Naive thymus-derived CD4-positive, alpha-beta T cell (primary cell): ENCODE measurements at regions of chr1 and their contacts with region 1.

Region 1: GRCh38 chr1:94854458-94855306 is 34.5 kb downstream of the SLC44A3 start:
- DNase-seq: peak; percentile 52 to 83 (median 74)
- ATAC-seq: peak; percentile 99
- H3K4me3 ChIP-seq: peak overlapping the region; percentile 47
- H3K4me3 Mint-ChIP-seq: no peak overlapping the region
- H3K27ac ChIP-seq: peak overlapping the region; percentile 43
- H3K27ac Mint-ChIP-seq: no peak overlapping the region
- H3K4me1 ChIP-seq: peaks cover 0 to 3% of the 10 kb centered on the region in 2 donors
- H3K4me1 Mint-ChIP-seq: no peaks in the 10 kb centered on the region
- H3K27me3 ChIP-seq: no peaks in the 10 kb centered on the region
- H3K27me3 Mint-ChIP-seq: peaks cover 0 to 14% (median 5%) of the 10 kb centered on the region in 5 donors

Region 2: GRCh38 chr1:94912263-94913184 is 57.8 kb after region 1 on chr1:
- CTCF ChIA-PET with region 1: no interaction called
- POLR2A ChIA-PET with region 1: no interaction called
- intact Hi-C with region 1: no loop called
- DNase-seq: no peak
- ATAC-seq: no peak
- H3K4me3 ChIP-seq: no peak overlapping the region
- H3K4me3 Mint-ChIP-seq: no peak overlapping the region
- H3K27ac ChIP-seq: no peak overlapping the region
- H3K27ac Mint-ChIP-seq: no peak overlapping the region
- H3K4me1 ChIP-seq: no peaks in the 10 kb centered on the region
- H3K4me1 Mint-ChIP-seq: peaks cover 0 to 6% (median 0%) of the 10 kb centered on the region in 7 donors
- H3K27me3 ChIP-seq: peaks cover 0 to 3% of the 10 kb centered on the region in 2 donors
- H3K27me3 Mint-ChIP-seq: peaks cover 0 to 14% (median 0%) of the 10 kb centered on the region in 5 donors

Region 3: DNA sequence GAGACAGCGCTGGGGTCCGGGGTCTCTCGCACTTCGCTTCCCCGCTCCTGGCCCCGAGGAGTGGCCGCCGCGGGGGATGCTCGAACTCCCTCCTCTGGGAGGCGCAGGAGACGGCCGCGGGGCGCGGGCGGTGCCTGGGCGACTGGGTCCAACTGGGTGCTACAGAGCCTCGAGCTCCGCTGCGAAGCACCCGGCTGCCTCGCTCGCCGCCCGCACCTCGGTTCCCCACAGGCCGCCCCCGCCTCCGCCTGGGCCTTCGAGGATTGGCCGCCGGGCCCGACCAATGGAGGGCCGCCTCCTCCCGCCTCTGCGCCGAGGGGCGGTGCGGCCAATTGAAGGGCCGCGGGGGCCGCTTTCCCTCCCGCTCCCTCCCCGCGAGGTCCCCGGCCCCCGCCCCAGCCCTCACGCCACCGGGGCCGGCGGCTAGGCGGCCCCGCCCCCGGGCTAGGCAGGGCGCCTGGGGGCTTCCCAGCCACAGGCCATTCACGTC is 72.3 kb after region 1 on chr1 and contains the start of gene CNN3:
- CTCF ChIA-PET with region 1: interaction called, 4 read pairs
- POLR2A ChIA-PET with region 1: no interaction called
- intact Hi-C with region 1: loop called (anchors 1 to 10 kb)
- DNase-seq: peak; percentile 56 to 78 (median 68)
- ATAC-seq: peak; percentile 91
- H3K4me3 ChIP-seq: peak within 1 kb of the TSS; percentile 39
- H3K4me3 Mint-ChIP-seq: peak within 1 kb of the TSS; percentile 88 to 97 (median 94)
- H3K27ac ChIP-seq: peak within 1 kb of the TSS; percentile 63
- H3K27ac Mint-ChIP-seq: peak within 1 kb of the TSS; percentile 37 to 92 (median 84)
- H3K4me1 ChIP-seq: no peaks in the 10 kb centered on the region
- H3K4me1 Mint-ChIP-seq: peaks cover 12 to 38% (median 34%) of the 10 kb centered on the region in 7 donors
- H3K27me3 ChIP-seq: no peaks in the 10 kb centered on the region
- H3K27me3 Mint-ChIP-seq: peaks cover 18 to 57% (median 26%) of the 10 kb centered on the region in 5 donors
- total RNA-seq, gene CNN3: 4.4 to 14.9 (median 7.4) TPM

Region 4: GRCh38 chr1:94962409-94963265 is 108.0 kb after region 1 on chr1:
- CTCF ChIA-PET with region 1: interaction called, 4 read pairs
- POLR2A ChIA-PET with region 1: interaction called, 7 read pairs
- intact Hi-C with region 1: loop called in 1 of 2 experiments (anchors 1 kb)
- DNase-seq: peak in 7 of 9 donors; percentile 21 to 41 (median 35)
- ATAC-seq: peak; percentile 73
- H3K4me3 ChIP-seq: peak overlapping the region; percentile 53
- H3K4me3 Mint-ChIP-seq: peak overlapping the region; percentile 82 to 99 (median 90)
- H3K27ac ChIP-seq: peak overlapping the region; percentile 68
- H3K27ac Mint-ChIP-seq: peak overlapping the region; percentile 87 to 99 (median 96)
- H3K4me1 ChIP-seq: peaks cover 0 to 18% of the 10 kb centered on the region in 2 donors
- H3K4me1 Mint-ChIP-seq: peaks cover 0 to 31% (median 15%) of the 10 kb centered on the region in 7 donors
- H3K27me3 ChIP-seq: no peaks in the 10 kb centered on the region
- H3K27me3 Mint-ChIP-seq: no peaks in the 10 kb centered on the region

Region 5: GRCh38 chr1:94993931-94994645 is 139.4 kb after region 1 on chr1:
- CTCF ChIA-PET with region 1: interaction called, 12 read pairs
- POLR2A ChIA-PET with region 1: no interaction called
- intact Hi-C with region 1: no loop called
- DNase-seq: no peak
- ATAC-seq: no peak
- H3K4me3 ChIP-seq: no peak overlapping the region
- H3K4me3 Mint-ChIP-seq: peak overlapping the region in 5 of 10 donors; percentile 0 to 51 (median 26)
- H3K27ac ChIP-seq: no peak overlapping the region
- H3K27ac Mint-ChIP-seq: peak overlapping the region in 5 of 9 donors; percentile 1 to 74 (median 34)
- H3K4me1 ChIP-seq: peaks cover 0 to 14% of the 10 kb centered on the region in 2 donors
- H3K4me1 Mint-ChIP-seq: peaks cover 0 to 24% (median 20%) of the 10 kb centered on the region in 7 donors
- H3K27me3 ChIP-seq: no peaks in the 10 kb centered on the region
- H3K27me3 Mint-ChIP-seq: no peaks in the 10 kb centered on the region

Region 6: GRCh38 chr1:95043141-95043980 is 188.7 kb after region 1 on chr1:
- CTCF ChIA-PET with region 1: interaction called, 112 read pairs
- POLR2A ChIA-PET with region 1: interaction called, 3 read pairs
- intact Hi-C with region 1: loop called (anchors 1 kb)
- DNase-seq: peak; percentile 57 to 81 (median 75)
- ATAC-seq: peak; percentile 100
- H3K4me3 ChIP-seq: no peak overlapping the region
- H3K4me3 Mint-ChIP-seq: no peak overlapping the region
- H3K27ac ChIP-seq: no peak overlapping the region
- H3K27ac Mint-ChIP-seq: no peak overlapping the region
- H3K4me1 ChIP-seq: no peaks in the 10 kb centered on the region
- H3K4me1 Mint-ChIP-seq: no peaks in the 10 kb centered on the region
- H3K27me3 ChIP-seq: no peaks in the 10 kb centered on the region
- H3K27me3 Mint-ChIP-seq: no peaks in the 10 kb centered on the region

Region 7: DNA sequence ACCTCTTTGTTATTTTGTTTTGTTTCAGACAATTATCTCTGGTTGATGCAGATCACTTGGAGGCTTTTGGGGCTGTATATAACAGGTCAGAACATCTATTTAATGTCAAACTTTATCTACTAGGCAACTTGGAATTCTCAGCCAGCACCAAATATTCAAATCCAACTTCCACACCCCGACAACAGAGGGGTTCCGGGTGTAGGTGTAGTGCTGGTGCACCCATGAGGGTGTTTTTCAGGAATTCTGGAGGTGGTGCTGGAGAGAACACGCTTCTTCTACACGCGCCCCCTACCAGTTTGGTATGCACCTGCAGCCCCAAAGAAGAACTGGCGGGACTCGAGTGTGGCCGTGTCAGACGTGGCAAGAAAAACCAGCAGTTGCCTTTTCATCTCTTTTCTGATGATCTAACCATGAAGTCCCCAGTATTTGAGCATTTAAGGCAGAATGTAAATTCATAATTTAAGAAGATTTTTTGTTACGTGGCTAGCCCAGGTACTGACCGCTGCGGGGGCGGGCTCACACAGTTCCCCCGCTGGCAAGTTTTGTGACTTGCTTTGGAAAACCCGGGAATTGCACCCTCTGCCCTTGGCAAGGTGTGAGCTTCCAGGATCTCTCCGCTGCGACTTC is 262.0 kb after region 1 on chr1:
- CTCF ChIA-PET with region 1: interaction called, 3 read pairs
- POLR2A ChIA-PET with region 1: no interaction called
- intact Hi-C with region 1: loop called in 1 of 2 experiments (anchors 2 kb)
- DNase-seq: peak; percentile 8 to 53 (median 44)
- ATAC-seq: peak; percentile 77
- H3K4me3 ChIP-seq: peak overlapping the region; percentile 57
- H3K4me3 Mint-ChIP-seq: peak overlapping the region; percentile 73 to 97 (median 91)
- H3K27ac ChIP-seq: no peak overlapping the region
- H3K27ac Mint-ChIP-seq: peak overlapping the region in 3 of 9 donors; percentile 5 to 86 (median 33)
- H3K4me1 ChIP-seq: peaks cover 4% of the 10 kb centered on the region in 2 donors
- H3K4me1 Mint-ChIP-seq: peaks cover 0 to 14% (median 9%) of the 10 kb centered on the region in 7 donors
- H3K27me3 ChIP-seq: peaks cover 0 to 3% of the 10 kb centered on the region in 2 donors
- H3K27me3 Mint-ChIP-seq: peaks cover 21 to 67% (median 52%) of the 10 kb centered on the region in 5 donors